AG04449 (cell line): ENCODE measurements at regions of chr19 and their contacts with region 1.

Region 1: DNA sequence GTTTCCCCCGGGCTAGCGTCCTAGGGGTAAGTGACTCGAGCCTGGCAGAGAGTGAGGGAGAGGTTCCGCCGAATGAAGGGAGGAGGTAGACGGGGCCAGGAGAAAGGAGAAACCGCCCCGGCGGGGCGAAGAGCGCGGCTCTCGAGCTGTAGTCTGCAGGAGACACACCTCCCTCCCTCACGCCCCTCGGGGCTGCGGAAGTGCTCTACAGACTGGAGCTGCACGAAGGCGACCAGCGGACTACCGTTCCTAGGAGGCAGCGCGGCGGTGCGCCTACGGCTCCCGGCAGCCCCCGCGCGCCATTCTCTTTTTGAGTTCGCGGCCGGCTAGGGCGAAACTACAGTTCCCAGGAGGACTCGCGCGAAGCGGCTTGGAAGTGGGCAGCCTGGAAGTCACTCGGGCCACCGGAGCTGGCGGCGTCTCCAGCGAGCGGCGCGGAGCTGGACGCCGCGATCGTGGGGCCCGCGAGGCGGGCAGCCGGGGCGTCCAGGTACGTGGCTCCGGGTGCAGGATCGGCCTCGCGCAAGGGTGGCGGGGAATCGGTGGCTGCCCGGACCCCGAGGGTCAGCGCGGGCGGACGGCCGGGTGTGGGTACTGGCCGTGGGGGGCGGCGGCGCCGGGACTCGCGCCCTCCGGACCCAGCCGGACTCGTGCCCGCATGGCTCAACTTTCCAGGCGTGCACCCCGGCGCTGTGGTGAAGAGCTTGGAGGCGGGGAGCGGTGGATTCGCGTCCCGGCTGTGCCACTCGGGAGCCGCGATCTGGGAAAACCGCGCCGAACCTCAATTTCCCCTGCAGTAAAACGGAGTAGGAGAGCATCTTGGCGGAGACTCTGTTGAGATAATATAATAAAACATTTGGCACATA is at the start of gene SIPA1L3:
- DNase-seq: peak; percentile 54
- H3K4me3 ChIP-seq: peak within 1 kb of the TSS; percentile 95
- CTCF ChIP-seq: no peak

Region 2: DNA sequence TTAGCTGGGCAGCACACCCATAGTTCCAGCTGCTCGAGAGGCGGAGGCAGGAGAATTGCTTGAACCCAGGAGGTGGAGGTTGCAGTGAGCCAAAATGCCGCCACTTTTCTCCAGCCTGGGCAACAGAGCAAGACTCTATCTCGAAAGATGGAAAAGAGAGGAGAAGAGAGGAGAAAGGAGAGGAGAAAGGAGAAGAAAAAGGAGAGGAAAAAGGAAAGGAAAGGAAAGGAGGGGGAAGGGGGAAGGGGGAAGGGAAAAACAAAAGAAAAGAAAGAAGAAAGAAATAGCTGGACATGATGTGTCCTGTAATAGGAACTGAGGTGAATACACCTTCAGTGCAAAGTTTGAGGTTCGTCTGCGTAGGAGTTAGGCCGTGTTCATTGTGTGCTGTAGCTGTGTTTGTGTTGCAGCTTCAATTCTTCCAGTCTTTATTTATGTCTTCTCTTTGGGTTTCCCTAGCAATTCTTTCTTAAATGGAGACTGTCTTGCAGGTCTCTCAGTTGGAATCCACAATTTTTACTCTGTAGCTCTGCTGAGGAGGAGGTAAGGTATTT is 201.0 kb before region 1 on chr19:
- CTCF ChIA-PET with region 1: no interaction called
- POLR2A ChIA-PET with region 1: no interaction called
- DNase-seq: no peak
- H3K4me3 ChIP-seq: no peak overlapping the region
- CTCF ChIP-seq: no peak

Region 3: GRCh38 chr19:37963190-37963936 is 56.3 kb after region 1 on chr19:
- CTCF ChIA-PET with region 1: interaction called, 11 read pairs
- POLR2A ChIA-PET with region 1: no interaction called
- DNase-seq: no peak
- H3K4me3 ChIP-seq: no peak overlapping the region
- CTCF ChIP-seq: no peak

Region 4: DNA sequence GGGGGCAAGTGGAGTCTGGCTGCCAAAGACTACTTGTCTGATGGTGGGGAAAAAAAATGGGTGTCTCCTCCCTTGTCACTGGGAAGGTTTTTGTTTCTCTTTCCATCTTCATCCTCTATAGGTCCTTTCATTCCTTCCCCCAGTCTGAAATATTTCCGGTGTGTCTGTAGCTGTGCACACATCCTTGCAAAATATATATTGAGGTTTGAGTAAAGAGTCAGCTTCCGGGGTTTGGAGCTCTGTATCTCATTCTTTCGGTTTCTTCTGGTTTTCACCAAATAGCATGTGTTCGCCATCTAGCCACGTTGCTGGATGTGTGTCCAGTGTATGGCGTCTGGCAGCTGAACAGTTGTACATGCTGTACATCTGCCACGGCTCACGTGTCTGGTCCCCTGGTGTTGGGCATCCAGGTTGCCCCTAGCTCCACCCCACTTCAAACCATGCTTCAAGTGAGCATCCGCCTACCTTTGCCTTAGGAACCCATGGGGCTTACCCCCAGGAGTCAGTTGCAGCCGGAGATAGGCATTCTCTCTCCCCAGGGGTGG is 142.1 kb after region 1 on chr19:
- CTCF ChIA-PET with region 1: interaction called, 213 read pairs
- POLR2A ChIA-PET with region 1: interaction called, 9 read pairs
- DNase-seq: no peak
- H3K4me3 ChIP-seq: no peak overlapping the region
- CTCF ChIP-seq: no peak

Region 5: DNA sequence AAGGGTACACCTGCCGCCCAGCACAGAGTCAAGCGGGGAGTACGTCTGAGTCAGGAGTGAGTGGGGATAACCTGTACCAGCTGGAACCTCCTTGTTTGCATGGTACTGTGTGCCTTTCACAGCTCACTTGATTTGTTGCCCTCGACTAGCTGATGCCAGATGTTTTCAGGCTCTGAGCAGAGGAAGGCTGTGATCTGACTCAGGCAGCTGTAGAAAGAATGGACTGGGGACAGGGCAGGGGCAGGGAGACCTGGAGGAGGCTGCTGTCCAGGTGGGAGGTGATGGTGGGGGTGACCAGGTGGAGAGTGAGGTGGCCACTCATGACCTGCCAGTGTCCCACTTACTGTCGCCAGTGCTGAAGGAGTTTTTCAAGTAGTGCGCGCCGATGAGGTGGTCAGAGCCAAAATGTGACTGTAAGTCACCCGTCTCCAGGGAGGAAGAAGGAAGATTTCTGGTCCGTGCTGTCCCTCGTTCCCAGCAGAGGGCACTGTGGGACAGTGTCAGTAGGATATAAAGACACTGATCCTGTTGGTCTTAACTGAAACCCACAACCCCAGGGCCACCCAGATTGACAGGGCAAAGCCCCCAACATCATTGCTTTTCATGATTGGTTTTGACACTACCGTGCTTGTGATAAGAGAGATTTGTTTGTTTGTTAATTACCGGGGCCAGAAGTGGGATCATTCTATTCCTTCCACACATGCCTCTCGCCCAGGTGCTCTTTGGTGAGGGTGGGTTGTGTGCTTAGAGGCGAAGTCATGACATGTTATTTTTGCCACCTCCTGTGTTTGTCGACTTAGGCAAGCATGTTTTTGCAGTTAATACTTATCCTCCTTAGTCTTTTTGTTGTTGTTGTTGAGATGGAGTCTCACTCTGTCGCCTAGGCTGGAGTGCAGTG is 188.6 kb after region 1 on chr19:
- CTCF ChIA-PET with region 1: interaction called, 50 read pairs
- POLR2A ChIA-PET with region 1: no interaction called
- DNase-seq: no peak
- H3K4me3 ChIP-seq: no peak overlapping the region
- CTCF ChIP-seq: peak; percentile 79

Region 6: GRCh38 chr19:38152461-38153379 is 245.6 kb after region 1 on chr19:
- CTCF ChIA-PET with region 1: interaction called, 72 read pairs
- POLR2A ChIA-PET with region 1: no interaction called
- DNase-seq: no peak
- H3K4me3 ChIP-seq: no peak overlapping the region
- CTCF ChIP-seq: no peak

Region 7: DNA sequence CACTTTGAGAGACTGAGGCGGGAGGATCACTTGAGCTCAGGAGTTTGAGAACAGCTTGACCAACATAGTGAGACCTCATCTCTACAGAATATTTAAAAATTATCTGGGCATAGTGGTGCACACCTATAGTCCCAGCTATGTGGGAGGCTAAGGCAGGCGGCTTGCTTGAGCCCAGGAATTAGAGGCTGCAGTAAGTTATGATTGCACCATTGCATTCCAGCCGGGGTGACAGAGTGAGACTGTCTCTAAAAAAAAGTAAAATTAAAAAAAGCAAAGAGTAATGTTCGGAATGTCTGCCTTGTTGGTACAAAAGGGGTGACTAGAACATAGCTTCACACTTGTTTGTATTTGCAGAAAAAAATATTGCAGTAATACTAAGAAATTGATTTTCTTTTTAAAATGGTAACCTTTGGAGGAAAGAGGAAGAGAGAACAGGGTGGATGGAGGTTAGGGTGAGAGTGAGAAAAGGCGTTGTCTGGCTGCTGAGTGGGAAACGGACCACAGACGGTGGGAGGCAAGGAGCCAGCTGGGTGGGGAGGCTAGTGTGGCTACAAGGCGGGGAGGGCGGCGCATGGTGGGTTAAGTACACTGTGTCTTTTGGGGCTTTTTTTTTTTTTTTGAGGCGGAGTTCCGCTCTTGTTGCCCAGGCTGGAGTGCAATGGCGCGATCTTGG is 338.9 kb after region 1 on chr19:
- CTCF ChIA-PET with region 1: interaction called, 28 read pairs
- POLR2A ChIA-PET with region 1: no interaction called
- DNase-seq: no peak
- H3K4me3 ChIP-seq: no peak overlapping the region
- CTCF ChIP-seq: no peak